ENCODE measurements at regions of chr17 and their contacts with region 1.

Region 1: DNA sequence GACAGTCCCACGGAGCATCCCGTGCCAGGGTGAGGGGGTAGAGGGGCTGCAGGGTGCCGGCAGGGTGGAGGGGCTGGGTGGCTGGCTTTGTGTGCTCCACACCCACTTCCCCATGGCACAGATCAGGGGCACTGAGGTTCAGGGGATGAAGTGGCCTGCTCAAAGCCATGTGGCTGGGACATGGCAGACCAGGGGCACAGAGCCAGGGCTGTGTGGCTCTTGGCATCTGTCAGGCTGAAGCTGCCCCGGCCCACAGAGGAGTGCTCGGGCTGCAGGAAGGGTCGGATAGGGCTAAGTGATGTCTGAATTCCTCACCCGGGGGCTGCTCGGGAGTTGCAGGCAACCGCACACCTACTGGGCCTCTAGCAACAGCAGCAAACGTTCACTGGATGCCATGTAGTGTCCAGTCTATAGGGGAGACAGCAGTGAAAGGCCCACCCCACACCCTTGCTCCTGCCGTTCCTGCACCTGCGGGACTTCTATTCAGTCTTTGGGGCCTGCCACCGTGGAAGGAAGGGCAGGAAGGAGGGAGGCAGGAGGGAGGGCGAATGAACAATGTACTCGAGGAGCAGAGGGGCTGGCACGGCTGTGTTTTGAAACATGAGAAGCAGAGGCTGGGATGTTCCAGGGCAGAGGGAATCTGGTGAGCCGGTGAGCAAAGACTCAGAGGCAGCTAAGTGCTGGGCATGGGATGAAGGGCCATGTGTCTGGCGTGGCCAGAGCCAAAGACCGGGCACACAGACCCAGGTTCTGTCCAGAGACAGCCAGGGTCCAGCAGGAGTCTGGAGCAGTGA is 15.1 kb downstream of the SLC5A10 start:
- DNase-seq: no peak
- H3K4me3 ChIP-seq: no peak overlapping the region
- H3K27ac ChIP-seq: no peak overlapping the region
- H3K4me1 ChIP-seq: peaks cover 24% of the 10 kb centered on the region
- H3K27me3 ChIP-seq: no peaks in the 10 kb centered on the region
- CTCF ChIP-seq: no peak

Region 2: GRCh38 chr17:18896146-18896545 is 70.9 kb before region 1 on chr17:
- CTCF ChIA-PET with region 1: no interaction called
- dilution Hi-C with region 1: loop called (anchors 5 kb)
- in situ Hi-C with region 1: no loop called
- intact Hi-C with region 1: no loop called
- DNase-seq: no peak
- H3K4me3 ChIP-seq: no peak overlapping the region
- H3K27ac ChIP-seq: no peak overlapping the region
- H3K4me1 ChIP-seq: no peaks in the 10 kb centered on the region
- H3K27me3 ChIP-seq: no peaks in the 10 kb centered on the region
- CTCF ChIP-seq: no peak

Region 3: DNA sequence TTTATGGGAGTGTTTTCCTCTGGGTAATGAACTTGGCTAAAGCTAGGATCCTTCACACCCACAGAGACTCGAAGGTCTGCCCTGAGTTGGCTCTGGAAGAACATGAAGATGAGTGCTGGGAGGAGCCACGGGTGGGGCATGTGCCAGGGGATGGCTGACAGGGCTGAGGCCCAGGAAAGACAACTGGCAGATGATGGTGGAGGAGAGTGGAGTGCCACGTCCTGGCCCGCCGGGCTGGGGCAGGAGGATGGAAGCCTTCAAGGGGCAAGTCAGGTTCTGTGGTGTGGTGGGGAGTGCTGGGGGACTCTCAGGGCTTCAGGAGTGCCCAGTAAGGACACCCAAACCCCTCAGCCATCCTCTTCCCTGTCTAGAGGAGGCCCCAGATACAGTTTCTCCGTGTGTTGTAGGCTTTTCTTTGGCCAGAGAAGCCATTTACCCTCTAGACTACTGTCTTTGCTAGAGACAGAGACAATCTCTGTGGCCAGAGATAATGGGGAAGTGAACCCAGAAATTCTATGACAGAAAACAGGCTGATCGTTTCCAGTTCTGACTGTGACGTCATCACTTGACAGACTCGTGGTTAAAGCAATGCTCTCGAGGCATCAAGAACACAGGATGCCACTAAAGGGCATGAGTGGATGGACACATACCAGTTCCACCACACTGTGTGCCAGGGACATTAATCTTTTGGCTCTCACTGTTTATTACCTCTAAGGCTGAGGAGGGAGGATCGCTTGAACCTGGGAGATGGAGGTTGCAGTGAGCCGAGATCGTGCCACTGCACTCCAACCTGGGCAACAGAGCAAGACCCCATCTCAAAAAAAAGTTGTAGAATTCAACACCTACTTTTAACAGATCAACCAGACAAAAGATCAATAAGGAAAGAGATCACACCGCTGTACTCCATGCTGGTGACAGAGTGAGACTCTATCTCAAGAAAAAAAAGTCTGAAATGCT is 33.6 kb before region 1 on chr17:
- CTCF ChIA-PET with region 1: no interaction called
- dilution Hi-C with region 1: no loop called
- in situ Hi-C with region 1: no loop called
- intact Hi-C with region 1: no loop called
- DNase-seq: no peak
- H3K4me3 ChIP-seq: no peak overlapping the region
- H3K27ac ChIP-seq: no peak overlapping the region
- H3K4me1 ChIP-seq: no peaks in the 10 kb centered on the region
- H3K27me3 ChIP-seq: no peaks in the 10 kb centered on the region
- CTCF ChIP-seq: no peak

Measured in mammary epithelial cell (primary cell).